KBM-7 (cell line): ENCODE measurements at regions of chr4 and their contacts with region 1.

Region 1: GRCh38 chr4:185115827-185116232 is 27.2 kb upstream of the SLC25A4 start:
- DNase-seq: peak; percentile 78

Region 2: GRCh38 chr4:184616633-184617551 is 498.9 kb before region 1 on chr4:
- in situ Hi-C with region 1: no loop called
- DNase-seq: no peak

Region 3: GRCh38 chr4:184733654-184734524 is 381.9 kb before region 1 on chr4 and contains the start of gene CENPU:
- in situ Hi-C with region 1: loop called (anchors 25 kb)
- DNase-seq: peak; percentile 100

Region 4: GRCh38 chr4:184762100-184762499 is 353.7 kb before region 1 on chr4:
- in situ Hi-C with region 1: no loop called
- DNase-seq: no peak

Region 5: DNA sequence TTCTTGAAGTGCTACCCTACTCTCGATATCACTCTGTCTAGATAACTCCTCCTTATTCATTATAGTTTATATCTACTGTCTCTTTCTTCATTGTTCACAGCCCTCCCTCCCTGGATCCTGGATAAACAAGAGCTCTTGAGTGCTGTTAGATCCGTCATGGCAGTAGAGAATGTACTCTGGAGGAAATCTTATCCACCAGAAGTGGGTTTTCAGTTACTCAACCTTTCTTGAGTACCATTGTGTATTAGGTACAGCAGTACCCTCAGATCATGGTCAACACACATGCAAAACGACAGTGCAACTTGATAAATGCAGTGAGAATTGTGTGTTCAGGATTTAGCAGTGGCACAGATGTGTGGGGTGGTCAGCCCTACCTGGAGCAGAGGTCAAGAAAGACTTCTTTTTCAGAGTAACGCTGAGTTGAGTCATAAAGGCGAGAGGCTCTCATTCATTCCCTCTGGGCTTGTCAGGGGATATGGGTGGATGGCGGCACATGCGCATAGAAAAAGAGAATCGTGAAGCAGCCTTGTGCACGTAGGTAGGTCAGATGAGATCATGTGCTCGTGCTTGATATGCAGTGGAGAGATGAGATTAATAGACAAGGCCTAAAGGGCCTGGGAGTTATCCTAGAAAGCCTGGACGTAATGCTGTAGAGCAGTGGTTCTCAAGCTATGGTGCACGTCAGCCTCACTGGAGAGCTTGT is 183.0 kb after region 1 on chr4:
- in situ Hi-C with region 1: no loop called
- DNase-seq: no peak

Region 6: GRCh38 chr4:185343726-185344581 is 228.1 kb after region 1 on chr4:
- in situ Hi-C with region 1: no loop called
- DNase-seq: peak; percentile 19